ENCODE measurements at regions of chr9 and their contacts with region 1.

Region 1: DNA sequence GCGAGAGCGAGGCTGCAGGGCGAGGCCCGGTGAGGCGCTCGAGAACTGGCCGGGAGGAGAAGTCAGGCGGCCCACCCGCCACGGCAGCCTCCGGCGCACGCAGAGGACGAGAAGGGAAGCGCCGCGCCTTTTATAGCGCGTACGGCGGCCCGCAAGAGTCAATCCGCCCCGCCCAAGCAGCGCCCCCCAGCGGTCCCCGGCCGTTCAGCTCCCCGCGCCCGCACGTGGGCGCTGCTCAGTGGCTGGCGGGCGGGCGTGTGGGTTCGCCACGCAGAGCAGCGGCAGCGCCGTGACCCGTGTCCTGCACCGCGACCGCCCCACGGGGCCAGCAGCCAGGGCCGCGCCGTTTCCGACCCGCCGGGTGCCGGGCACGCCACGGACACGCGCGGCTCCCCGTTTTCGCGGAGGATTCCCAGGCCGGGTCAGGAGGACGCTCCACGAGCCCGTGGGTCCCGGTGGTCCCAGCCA is 14.6 kb downstream of the LCN10 start:
- DNase-seq: peak; percentile 86 to 97 (median 92)
- ATAC-seq: peak; percentile 80
- H3K4me3 ChIP-seq: peak overlapping the region; percentile 66 to 96
- H3K4me3 Mint-ChIP-seq: peak overlapping the region; percentile 92
- H3K27ac ChIP-seq: peak overlapping the region in 1 of 2 experiments; percentile 84
- H3K27ac Mint-ChIP-seq: peak overlapping the region; percentile 45
- H3K4me1 ChIP-seq: peaks cover 30% of the 10 kb centered on the region
- H3K4me1 Mint-ChIP-seq: peaks cover 25% of the 10 kb centered on the region
- H3K27me3 ChIP-seq: no peaks in the 10 kb centered on the region
- H3K27me3 Mint-ChIP-seq: no peaks in the 10 kb centered on the region
- CTCF ChIP-seq: peak; percentile 93

Region 2: DNA sequence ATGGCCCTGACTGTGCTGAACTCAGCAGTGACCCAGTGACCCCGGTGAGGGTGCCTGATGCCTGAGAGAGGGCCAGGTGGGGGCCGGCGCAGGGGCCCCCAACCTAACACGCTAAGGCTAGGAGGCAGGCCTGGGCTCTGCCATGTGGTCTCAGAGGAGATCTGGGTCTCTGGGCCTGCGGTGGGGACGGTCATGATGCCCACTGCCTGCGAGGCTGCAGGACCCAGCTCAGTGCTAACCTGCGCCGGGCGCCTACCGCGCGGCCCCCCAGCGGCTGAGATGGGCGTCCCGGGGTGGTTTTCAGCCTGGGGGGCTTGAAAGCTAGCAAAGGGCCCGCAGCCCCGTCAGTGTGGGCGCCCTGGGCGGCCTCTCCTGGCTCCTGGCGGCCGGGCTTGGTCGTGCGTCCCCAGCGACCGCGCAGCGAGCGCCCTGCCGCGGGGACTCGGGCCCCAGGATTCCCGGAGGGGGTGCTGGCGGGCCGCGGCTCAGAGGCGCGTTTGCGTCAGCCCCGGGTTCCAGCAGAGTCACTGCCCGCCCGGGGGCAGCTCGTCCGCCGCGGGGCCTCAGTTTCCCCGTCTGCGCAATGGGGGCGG is 62.9 kb before region 1 on chr9:
- CTCF ChIA-PET with region 1: interaction called, 3 read pairs
- POLR2A ChIA-PET with region 1: no interaction called
- intact Hi-C with region 1: loop called in 1 of 2 experiments (anchors 5 kb)
- DNase-seq: peak in 3 of 9 experiments; percentile 27 to 48 (median 43)
- ATAC-seq: peak; percentile 43
- H3K4me3 ChIP-seq: peak overlapping the region; percentile 15
- H3K4me3 Mint-ChIP-seq: peak overlapping the region; percentile 72
- H3K27ac ChIP-seq: no peak overlapping the region
- H3K27ac Mint-ChIP-seq: no peak overlapping the region
- H3K4me1 ChIP-seq: peaks cover 5% of the 10 kb centered on the region
- H3K4me1 Mint-ChIP-seq: no peaks in the 10 kb centered on the region
- H3K27me3 ChIP-seq: peaks cover 8 to 24% of the 10 kb centered on the region in 2 experiments
- H3K27me3 Mint-ChIP-seq: peaks cover 3% of the 10 kb centered on the region
- CTCF ChIP-seq: no peak

Region 3: GRCh38 chr9:136686794-136687711 is 41.1 kb before region 1 on chr9 and contains the start of gene AGPAT2:
- CTCF ChIA-PET with region 1: no interaction called
- POLR2A ChIA-PET with region 1: no interaction called
- intact Hi-C with region 1: loop called (anchors 1 kb)
- DNase-seq: peak in 8 of 9 experiments; percentile 48 to 77 (median 64)
- ATAC-seq: peak; percentile 89
- H3K4me3 ChIP-seq: peak within 1 kb of the TSS; percentile 61 to 63
- H3K4me3 Mint-ChIP-seq: peak within 1 kb of the TSS; percentile 78
- H3K27ac ChIP-seq: no peak within 1 kb of the TSS
- H3K27ac Mint-ChIP-seq: peak within 1 kb of the TSS; percentile 41
- H3K4me1 ChIP-seq: peaks cover 9% of the 10 kb centered on the region
- H3K4me1 Mint-ChIP-seq: peaks cover 5% of the 10 kb centered on the region
- H3K27me3 ChIP-seq: no peaks in the 10 kb centered on the region
- H3K27me3 Mint-ChIP-seq: no peaks in the 10 kb centered on the region
- CTCF ChIP-seq: no peak
- total RNA-seq, gene AGPAT2: 4.7 TPM

Region 4: DNA sequence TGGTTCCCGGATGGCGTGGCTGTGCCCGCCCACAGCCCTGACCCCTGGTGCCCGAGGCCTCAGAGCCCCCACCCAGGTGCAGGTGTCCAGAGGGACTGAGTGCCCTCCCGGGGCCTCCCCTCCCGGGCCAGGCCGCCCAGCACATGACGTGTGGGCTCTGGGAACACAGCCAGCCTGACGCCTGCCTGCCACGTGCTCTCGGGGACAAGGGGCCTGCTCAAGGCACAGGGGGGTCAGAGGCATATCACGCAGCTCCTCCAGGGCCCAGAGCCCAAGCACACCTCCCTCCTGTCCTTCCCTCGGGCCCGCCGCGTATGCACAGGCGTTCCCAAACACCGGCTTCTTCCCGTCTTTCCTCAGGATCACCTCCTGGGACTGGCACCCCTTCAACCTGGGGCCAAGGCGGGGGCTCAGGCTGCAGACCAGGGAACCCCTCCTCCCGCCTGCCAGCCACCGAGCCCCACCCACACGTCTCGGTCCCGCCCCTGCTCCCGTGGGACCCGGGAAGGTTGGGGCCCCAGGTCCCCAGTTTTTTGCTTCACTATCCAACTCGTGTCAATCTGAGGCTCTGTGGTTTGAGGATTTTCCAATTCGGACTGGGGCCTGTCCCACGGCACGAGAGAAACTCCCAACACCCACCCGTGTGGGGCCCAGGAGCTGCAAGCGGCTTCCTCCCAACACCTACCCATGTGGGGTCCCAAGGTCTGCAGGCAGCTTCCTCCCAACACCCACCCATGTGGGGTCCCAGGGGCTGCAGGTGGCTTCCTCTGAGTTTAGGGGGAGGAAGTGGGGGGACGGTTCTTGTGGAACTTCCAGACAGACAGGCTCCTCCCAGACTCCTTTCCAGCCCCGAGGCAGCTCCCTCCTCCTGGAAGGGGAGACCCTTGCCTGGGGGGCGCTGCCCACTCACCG is 13.1 kb after region 1 on chr9:
- CTCF ChIA-PET with region 1: interaction called, 8 read pairs
- POLR2A ChIA-PET with region 1: interaction called, 10 read pairs
- intact Hi-C with region 1: no loop called
- DNase-seq: no peak
- ATAC-seq: peak; percentile 48
- H3K4me3 ChIP-seq: peak overlapping the region; percentile 42 to 71
- H3K4me3 Mint-ChIP-seq: peak overlapping the region; percentile 80
- H3K27ac ChIP-seq: no peak overlapping the region
- H3K27ac Mint-ChIP-seq: no peak overlapping the region
- H3K4me1 ChIP-seq: peaks cover 20% of the 10 kb centered on the region
- H3K4me1 Mint-ChIP-seq: peaks cover 5% of the 10 kb centered on the region
- H3K27me3 ChIP-seq: peaks cover 0 to 9% of the 10 kb centered on the region in 2 experiments
- H3K27me3 Mint-ChIP-seq: no peaks in the 10 kb centered on the region
- CTCF ChIP-seq: no peak

Region 5: GRCh38 chr9:136928591-136928990 is 200.5 kb after region 1 on chr9:
- CTCF ChIA-PET with region 1: no interaction called
- POLR2A ChIA-PET with region 1: no interaction called
- intact Hi-C with region 1: no loop called
- DNase-seq: peak in 1 of 9 experiments; percentile 8
- ATAC-seq: no peak
- H3K4me3 ChIP-seq: no peak overlapping the region
- H3K4me3 Mint-ChIP-seq: no peak overlapping the region
- H3K27ac ChIP-seq: no peak overlapping the region
- H3K27ac Mint-ChIP-seq: no peak overlapping the region
- H3K4me1 ChIP-seq: no peaks in the 10 kb centered on the region
- H3K4me1 Mint-ChIP-seq: no peaks in the 10 kb centered on the region
- H3K27me3 ChIP-seq: no peaks in the 10 kb centered on the region
- H3K27me3 Mint-ChIP-seq: no peaks in the 10 kb centered on the region
- CTCF ChIP-seq: no peak

Region 6: DNA sequence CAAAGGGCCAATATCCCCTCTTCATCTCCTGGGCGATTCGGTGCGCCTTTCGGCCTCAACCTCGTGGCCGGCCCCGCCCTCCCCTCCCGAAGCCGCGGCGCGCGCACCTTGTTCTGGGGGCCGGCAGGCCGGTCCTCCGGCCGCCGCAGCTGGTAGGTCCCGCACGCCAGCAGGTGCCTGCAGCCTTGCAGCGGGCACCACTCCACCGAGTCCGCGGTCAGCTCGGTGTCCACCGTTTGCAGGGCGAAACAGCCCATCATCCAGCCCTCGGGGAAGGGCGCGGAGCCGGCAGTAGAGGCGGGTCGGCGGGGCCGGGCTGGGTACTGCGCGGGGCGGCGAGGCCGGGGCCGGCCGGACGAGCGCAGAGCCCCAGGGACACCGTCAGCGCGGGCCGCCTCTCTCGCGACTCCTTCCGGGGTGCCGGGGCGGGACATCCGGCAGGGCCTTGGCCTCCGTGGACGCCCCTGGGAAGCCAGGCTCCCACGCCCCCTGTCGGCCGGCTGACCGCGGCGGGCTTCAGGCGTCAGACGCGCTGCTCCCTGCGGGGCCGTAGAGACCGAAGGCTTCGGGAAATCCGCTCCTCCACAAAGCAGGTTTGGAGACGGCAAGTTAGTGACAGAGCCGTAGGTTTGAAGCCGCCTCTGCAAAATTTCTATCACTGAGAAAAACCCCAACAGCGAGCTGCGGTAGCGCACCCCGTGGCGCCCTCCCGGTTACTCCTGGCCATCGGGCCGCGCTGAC is 850.6 kb after region 1 on chr9 and contains the start of gene DPH7:
- CTCF ChIA-PET with region 1: no interaction called
- POLR2A ChIA-PET with region 1: no interaction called
- intact Hi-C with region 1: no loop called
- DNase-seq: peak; percentile 91 to 98 (median 96)
- ATAC-seq: peak; percentile 96
- H3K4me3 ChIP-seq: peak within 1 kb of the TSS; percentile 58 to 95
- H3K4me3 Mint-ChIP-seq: peak within 1 kb of the TSS; percentile 81
- H3K27ac ChIP-seq: peak within 1 kb of the TSS; percentile 36 to 57
- H3K27ac Mint-ChIP-seq: peak within 1 kb of the TSS; percentile 67
- H3K4me1 ChIP-seq: peaks cover 24% of the 10 kb centered on the region
- H3K4me1 Mint-ChIP-seq: peaks cover 27% of the 10 kb centered on the region
- H3K27me3 ChIP-seq: no peaks in the 10 kb centered on the region
- H3K27me3 Mint-ChIP-seq: no peaks in the 10 kb centered on the region
- CTCF ChIP-seq: peak; percentile 79
- total RNA-seq, gene DPH7: 47.0 to 49.8 TPM